Panc1 (cell line): ENCODE measurements at regions of chr2 and their contacts with region 1.

Region 1: DNA sequence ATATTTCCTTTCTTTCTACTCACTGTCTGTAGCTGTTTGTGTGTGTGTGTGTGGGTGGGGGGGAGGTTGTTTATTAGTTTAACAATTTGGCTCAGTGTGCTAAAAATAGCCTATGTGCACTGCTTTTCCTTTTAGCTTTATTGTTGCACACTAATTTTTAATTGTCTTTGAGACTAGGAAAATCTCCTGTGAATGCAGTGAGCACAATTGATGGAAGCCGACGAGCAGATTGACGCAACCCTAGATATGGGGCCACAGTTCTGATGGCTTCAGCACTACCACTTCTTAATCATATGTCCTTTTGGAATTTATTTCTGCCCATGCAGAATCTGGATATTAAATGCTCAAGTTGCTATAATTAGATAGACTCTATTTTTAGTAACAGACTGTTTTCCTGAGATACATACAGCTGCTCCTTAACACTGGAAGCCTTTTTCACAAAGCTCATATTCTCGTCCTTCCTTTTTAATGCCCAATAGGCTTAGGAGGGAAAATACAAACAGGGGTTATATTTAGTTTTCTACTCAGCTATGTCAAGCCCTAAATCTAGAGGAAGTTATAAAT is 109.1 kb downstream of the IRS1 start:
- DNase-seq: no peak
- ATAC-seq: no peak
- H3K4me3 ChIP-seq: no peak overlapping the region
- H3K27ac ChIP-seq: no peak overlapping the region
- H3K4me1 ChIP-seq: no peaks in the 10 kb centered on the region; the same call in 1 of the 2 replicates
- H3K27me3 ChIP-seq: no peaks in the 10 kb centered on the region
- CTCF ChIP-seq: no peak

Region 2: DNA sequence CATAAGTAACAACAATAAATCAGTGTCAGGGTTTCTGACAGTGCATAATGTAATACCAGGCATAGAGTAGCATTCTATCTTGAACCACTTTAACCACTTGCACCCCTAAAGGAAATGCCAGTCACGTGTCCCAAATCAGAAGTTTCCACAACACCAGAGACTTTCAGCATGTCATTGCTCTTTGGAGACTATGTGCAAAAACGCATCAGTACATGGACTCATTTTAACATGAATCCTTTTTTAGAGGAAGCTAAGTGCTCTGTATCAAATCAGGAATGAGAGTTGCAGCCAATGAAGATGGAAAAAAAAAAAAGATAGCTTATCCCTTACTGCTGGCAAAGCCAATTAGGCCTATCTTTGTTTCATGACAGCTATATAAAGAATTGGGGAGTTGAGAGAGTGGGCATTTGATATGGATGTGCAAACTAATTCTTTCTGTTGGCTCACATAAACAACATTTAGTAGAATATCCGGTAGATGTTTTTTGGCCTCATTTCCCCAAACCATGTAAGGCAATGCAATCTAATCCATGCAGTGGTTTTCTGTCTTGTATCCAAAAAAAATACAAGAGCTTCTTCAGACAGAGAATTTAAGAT is 244.0 kb before region 1 on chr2:
- CTCF ChIA-PET with region 1: no interaction called
- POLR2A ChIA-PET with region 1: no interaction called
- in situ Hi-C with region 1: no loop called
- intact Hi-C with region 1: no loop called
- DNase-seq: no peak
- ATAC-seq: no peak
- H3K4me3 ChIP-seq: no peak overlapping the region
- H3K27ac ChIP-seq: no peak overlapping the region
- H3K4me1 ChIP-seq: no peaks in the 10 kb centered on the region
- H3K27me3 ChIP-seq: no peaks in the 10 kb centered on the region
- CTCF ChIP-seq: no peak

Region 3: DNA sequence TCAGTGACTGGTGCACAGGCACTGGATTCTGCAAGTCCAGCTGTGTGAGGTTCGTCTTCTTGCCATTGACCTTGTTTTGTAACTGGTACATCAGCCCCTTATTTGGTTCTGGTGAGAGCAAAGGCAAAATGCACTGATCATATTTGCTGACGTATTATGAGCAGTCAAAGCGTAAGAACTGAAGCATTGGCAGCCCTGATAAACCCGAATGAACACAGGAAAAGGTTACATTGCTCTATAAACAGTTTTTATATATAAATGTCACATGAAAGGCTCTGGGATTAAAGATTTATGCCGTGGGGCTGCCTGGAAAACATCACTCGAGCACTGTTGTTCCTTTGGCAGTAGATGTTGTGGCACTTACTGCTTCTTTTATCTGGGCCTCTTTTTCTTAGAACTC is 58.9 kb before region 1 on chr2:
- CTCF ChIA-PET with region 1: no interaction called
- POLR2A ChIA-PET with region 1: no interaction called
- in situ Hi-C with region 1: no loop called
- intact Hi-C with region 1: no loop called
- DNase-seq: no peak
- ATAC-seq: no peak
- H3K4me3 ChIP-seq: no peak overlapping the region
- H3K27ac ChIP-seq: no peak overlapping the region
- H3K4me1 ChIP-seq: 0 out of 2 replicates have a peak, but pooled peaks cover 3% of the 10 kb centered on the region
- H3K27me3 ChIP-seq: no peaks in the 10 kb centered on the region
- CTCF ChIP-seq: no peak

Region 4: DNA sequence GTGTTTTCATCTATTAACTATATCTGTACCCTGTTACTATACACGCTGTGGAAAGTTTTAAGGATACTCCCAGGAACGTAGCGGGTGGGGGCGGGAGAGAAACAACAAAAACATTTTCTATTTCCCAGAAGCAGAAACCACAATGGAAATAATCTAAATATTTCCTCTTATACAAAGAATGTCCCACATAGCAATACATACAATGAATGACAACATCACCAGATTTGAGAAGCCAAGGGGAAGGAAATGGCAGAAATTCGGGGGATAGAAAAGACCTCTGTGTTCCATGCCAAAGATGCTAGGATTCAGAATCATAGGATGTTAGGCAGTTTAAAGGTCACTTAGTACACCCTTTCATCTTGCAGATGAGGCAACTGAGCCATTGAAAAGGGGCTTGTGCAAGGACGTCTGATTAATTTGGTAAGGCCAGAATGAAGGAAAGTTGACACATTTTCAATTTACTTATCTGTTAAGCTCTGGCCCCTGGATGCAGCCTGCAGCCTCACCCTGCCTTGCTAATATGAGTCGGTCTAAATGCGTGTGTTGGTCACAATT is 738.3 kb after region 1 on chr2:
- CTCF ChIA-PET with region 1: interaction called, 14 read pairs
- POLR2A ChIA-PET with region 1: no interaction called
- in situ Hi-C with region 1: no loop called
- intact Hi-C with region 1: no loop called
- DNase-seq: no peak
- ATAC-seq: no peak
- H3K4me3 ChIP-seq: no peak overlapping the region
- H3K27ac ChIP-seq: no peak overlapping the region
- H3K4me1 ChIP-seq: no peaks in the 10 kb centered on the region
- H3K27me3 ChIP-seq: no peaks in the 10 kb centered on the region
- CTCF ChIP-seq: no peak